PC-3 (cell line): ENCODE measurements at regions of chr20 and their contacts with region 1.

Region 1: GRCh38 chr20:63973636-63974402 is 4.1 kb upstream of the ZNF512B start:
- DNase-seq: peak; percentile 84
- ATAC-seq: peak; percentile 67
- H3K4me3 ChIP-seq: peak overlapping the region; percentile 30; the same call in 1 of the 2 replicates
- H3K27ac ChIP-seq: no peak overlapping the region
- H3K4me1 ChIP-seq: peaks cover 17% of the 10 kb centered on the region
- H3K27me3 ChIP-seq: no peaks in the 10 kb centered on the region
- CTCF ChIP-seq: peak; percentile 97

Region 2: DNA sequence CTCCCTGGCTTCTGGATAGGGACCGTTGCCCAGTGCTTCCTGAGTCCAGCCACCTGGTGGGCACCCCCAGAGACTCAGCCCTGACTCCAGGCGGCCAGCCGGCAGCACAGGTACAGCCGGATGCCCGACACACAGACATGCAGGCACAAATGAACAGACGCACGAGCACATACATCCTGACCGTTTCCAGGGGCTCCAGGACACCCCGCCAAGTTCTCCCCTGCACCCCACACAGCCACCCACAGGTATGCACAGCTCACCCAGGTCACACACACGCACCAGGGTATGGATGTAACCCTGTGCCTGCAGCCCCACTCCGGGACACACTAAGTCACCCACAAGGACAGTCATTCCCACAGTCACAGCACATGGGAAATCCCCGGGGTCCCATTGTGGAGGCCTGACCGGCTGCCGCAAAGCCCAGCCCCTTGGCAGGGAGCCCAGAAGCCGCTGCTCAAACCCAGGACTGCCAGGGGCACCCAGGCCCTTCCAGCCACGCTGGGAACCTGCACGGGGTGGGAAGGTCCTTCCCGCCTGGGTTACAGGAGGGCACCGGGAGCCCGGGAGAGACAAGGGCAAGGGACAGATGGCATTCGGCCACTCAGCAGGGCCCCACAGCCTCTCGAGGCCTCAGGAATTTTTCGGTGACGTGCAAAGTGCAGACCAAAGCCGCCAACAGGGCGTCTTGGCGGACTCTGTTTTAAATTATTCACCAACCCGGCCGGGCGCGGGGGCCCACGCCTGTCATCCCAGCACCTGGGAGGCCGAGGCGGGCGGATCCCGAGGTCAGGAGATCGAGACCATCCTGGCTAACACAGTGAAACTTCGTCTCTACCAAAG is 490.7 kb before region 1 on chr20:
- CTCF ChIA-PET with region 1: no interaction called
- POLR2A ChIA-PET with region 1: no interaction called
- intact Hi-C with region 1: no loop called
- DNase-seq: no peak
- ATAC-seq: peak; percentile 17
- H3K4me3 ChIP-seq: no peak overlapping the region
- H3K27ac ChIP-seq: no peak overlapping the region
- H3K4me1 ChIP-seq: 0 out of 2 replicates have a peak, but pooled peaks cover 5% of the 10 kb centered on the region
- H3K27me3 ChIP-seq: no peaks in the 10 kb centered on the region
- CTCF ChIP-seq: no peak

Region 3: DNA sequence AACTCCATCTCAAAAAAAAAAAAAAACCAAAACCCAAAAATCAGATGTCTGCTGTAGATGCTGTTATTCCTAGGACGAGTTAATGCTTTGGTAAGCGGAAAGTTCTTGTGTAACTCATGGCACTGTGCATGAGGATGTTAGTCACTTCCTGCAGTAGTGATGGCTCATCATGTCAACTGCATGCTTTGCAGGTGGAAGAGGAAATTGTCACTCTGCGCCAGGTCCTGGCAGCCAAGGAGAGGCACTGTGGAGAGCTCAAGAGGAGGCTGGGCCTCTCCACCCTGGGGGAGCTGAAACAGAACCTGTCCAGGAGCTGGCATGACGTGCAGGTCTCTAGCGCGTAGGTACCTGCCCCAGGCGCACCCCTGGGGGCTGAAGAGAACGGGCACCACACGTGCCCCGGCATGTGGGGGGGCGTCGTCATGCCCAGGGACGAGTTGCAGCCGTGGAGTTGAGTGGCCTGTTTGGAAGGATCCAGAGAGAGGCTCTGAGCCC is 100.3 kb before region 1 on chr20:
- CTCF ChIA-PET with region 1: no interaction called
- POLR2A ChIA-PET with region 1: no interaction called
- intact Hi-C with region 1: loop called (anchors 5 kb)
- DNase-seq: peak; percentile 95
- ATAC-seq: peak; percentile 99
- H3K4me3 ChIP-seq: no peak overlapping the region
- H3K27ac ChIP-seq: peak overlapping the region; percentile 70
- H3K4me1 ChIP-seq: peaks cover 12% of the 10 kb centered on the region
- H3K27me3 ChIP-seq: no peaks in the 10 kb centered on the region
- CTCF ChIP-seq: no peak